ENCODE measurements at regions of chr5 and their contacts with region 1.

Region 1: GRCh38 chr5:131364507-131365050 is 100.7 kb downstream of the CDC42SE2 start:
- DNase-seq: no peak
- CTCF ChIP-seq: no peak

Region 2: DNA sequence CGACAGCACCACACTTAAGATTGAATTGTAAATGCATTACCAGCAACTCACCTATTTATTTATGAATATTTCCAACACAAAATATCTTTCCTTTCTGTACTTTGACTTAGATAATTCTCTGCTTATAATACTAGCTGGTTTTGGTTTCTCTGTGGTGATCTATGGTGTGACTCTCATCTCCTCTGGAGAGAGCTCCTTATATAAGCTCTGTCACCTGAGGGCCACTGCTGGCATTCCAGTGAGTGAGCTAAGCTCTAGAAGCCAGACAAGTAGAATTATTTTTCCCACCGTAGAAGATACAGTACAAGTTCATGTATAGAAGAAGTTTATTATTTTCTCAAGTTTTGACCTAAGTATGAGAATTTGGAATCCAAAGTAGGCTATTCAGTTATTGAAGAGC is 10.8 kb after region 1 on chr5:
- CTCF ChIA-PET with region 1: interaction called, 22 read pairs
- POLR2A ChIA-PET with region 1: no interaction called
- DNase-seq: no peak
- CTCF ChIP-seq: no peak